Breast epithelium (tissue), 4 donors: ENCODE measurements at regions of chr16 and their contacts with region 1.

Region 1: DNA sequence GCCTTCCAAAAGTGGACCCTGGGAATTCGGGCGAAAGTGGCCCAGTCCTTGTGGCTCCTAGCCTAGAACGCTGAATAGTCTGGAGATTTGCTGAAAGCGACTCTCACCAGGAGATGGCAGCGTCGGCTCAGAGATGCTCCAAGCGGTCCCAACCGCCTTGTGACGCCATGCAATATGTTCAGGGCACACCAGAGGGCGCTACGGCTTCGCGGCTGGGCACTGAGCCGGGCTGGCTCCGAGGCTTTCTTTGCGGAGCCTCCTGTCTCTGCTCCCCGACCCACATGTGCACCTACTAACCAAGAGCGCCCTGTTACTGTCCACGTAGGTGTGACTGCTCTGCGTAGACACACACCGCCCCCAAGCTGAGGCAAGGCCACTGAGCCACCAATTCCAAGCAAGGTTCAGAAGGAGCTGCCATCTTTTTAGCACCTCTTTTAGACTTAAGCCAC is 36.9 kb downstream of the SYCE1L start:
- DNase-seq: peak; percentile 72 to 90
- H3K4me3 ChIP-seq: peak overlapping the region in 1 of 3 donors; percentile 46
- H3K27ac ChIP-seq: no peak overlapping the region
- H3K4me1 ChIP-seq: no peaks in the 10 kb centered on the region
- H3K27me3 ChIP-seq: peaks cover 0 to 3% of the 10 kb centered on the region in 2 donors
- CTCF ChIP-seq: peak; percentile 97 to 100 (median 100)
- POLR2A ChIP-seq: no peak

Region 2: DNA sequence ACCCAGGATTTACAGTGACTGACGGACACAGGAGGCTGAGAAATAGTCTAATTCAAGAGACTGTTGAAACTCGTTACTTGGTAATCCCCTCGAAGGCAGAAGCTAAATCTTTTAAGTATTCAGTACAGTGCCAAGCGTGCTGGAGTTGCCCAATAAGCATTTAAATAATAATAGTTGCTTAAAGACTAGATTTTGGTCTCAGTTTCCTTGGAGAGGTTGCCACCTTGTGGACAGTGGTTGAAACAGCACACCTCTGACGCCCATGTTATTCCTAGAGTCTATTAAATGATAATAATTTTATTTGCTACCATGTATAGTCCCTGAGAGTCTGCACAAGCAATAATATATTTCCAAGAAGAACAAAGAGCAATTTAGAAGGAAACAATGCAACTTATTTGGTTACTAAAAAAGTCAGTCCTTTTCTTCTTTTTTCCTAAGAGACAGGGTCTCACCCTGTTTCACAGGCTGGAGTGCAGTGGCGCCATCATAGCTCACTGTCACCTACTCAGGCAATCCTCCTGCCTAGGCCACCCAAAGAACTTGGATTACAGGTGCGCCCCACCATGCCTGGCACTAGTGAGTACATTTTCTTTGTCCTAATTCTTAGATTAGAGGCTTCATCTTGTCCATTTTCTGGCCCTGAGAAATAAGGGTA is 348.2 kb after region 1 on chr16:
- intact Hi-C with region 1: loop called (anchors 5 kb)
- DNase-seq: peak in 1 of 2 donors; percentile 40
- H3K4me3 ChIP-seq: no peak overlapping the region
- H3K27ac ChIP-seq: peak overlapping the region in 1 of 2 donors; percentile 66
- H3K4me1 ChIP-seq: no peaks in the 10 kb centered on the region
- H3K27me3 ChIP-seq: no peaks in the 10 kb centered on the region
- CTCF ChIP-seq: peak; percentile 84 to 91 (median 87)
- POLR2A ChIP-seq: no peak